ENCODE measurements at regions of chr15 and their contacts with region 1.

Region 1: DNA sequence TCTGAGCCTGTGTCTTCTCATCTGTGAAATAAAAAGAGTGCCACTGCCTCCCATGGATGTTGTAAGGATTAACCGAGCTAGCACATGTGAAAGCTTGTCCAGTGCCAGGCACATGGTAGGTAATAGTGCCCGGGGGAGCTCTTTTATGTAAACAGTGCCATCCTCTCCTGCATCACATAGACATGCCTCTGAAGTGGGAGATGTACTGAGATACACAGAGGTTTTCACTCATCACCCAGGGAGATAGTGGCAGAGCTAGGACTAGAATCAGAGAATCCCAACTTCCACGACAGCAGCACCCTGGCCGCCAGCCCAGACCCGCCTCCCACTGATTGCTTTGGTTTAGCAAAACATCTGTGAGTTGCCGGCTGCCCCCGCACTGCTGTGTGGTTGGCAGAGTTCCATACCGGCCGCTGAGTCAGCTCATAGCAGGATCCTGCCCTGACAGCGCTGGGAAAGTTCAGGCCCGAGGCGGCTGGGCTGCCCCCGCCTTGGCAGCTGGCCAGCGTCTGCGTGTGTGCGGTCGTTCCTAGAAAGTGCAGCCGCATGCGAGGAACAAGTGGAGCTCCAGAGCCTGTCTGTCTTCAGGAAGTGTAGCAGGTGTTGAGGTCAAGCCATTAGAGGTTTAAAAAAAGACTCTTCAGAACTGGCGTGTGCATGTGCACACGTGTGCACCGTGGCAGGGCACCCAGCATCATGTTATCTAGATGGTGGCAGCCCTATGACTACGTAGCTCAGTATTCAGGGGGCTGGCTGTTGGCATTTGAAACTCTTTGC is 5.0 kb downstream of the ARID3B start:
- DNase-seq: peak; percentile 99 to 100
- ATAC-seq: peak; percentile 91
- H3K4me3 ChIP-seq: no peak overlapping the region
- H3K27ac ChIP-seq: no peak overlapping the region
- H3K4me1 ChIP-seq: peaks cover 0 to 9% of the 10 kb centered on the region in 2 donors
- H3K27me3 ChIP-seq: no peaks in the 10 kb centered on the region

Region 2: DNA sequence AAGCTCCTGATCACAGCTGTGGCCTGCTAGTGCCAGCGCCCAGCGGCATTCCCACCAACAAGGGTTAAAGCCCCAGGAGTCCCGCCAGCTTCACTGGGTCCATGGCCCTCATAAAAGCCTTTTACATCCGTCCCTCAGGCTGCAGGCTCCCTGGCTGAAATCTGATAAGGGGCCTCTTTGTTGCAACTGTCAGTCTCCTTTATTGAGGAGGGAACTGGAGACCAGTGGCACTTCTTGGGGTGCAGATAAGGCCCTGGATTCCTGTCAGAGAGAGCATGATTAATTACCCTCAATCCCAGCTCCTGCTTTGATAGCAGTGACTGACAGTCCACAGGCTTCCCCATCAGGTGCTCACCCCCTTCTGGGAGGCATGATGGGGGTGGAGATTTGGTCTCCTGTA is 38.7 kb after region 1 on chr15:
- intact Hi-C with region 1: loop called in 1 of 2 experiments (anchors 5 kb)
- DNase-seq: peak in 1 of 2 donors; percentile 36
- ATAC-seq: no peak
- H3K4me3 ChIP-seq: no peak overlapping the region
- H3K27ac ChIP-seq: no peak overlapping the region
- H3K4me1 ChIP-seq: no peaks in the 10 kb centered on the region
- H3K27me3 ChIP-seq: no peaks in the 10 kb centered on the region

Region 3: GRCh38 chr15:75029378-75030022 is 483.4 kb after region 1 on chr15:
- intact Hi-C with region 1: no loop called
- DNase-seq: peak; percentile 97 to 99
- ATAC-seq: peak; percentile 94
- H3K4me3 ChIP-seq: no peak overlapping the region
- H3K27ac ChIP-seq: peak overlapping the region; percentile 15 to 26
- H3K4me1 ChIP-seq: no peaks in the 10 kb centered on the region
- H3K27me3 ChIP-seq: no peaks in the 10 kb centered on the region